Uterus (tissue), 4 donors: ENCODE measurements at regions of chr2 and their contacts with region 1.

Region 1: GRCh38 chr2:152717228-152718075 is at the start of gene PRPF40A:
- DNase-seq: peak; percentile 98 to 99
- H3K4me3 ChIP-seq: peak within 1 kb of the TSS; percentile 96 to 98
- H3K27ac ChIP-seq: peak within 1 kb of the TSS; percentile 97 to 98
- H3K4me1 ChIP-seq: peaks cover 7 to 9% of the 10 kb centered on the region in 2 donors
- H3K27me3 ChIP-seq: no peaks in the 10 kb centered on the region
- CTCF ChIP-seq: peak in 1 of 4 experiments; percentile 25
- POLR2A ChIP-seq: peak; percentile 56 to 74
- total RNA-seq, gene PRPF40A: 69.1 to 151 (median 85.3) TPM

Region 2: GRCh38 chr2:152175458-152176325 is 541.8 kb before region 1 on chr2 and contains the start of gene STAM2:
- intact Hi-C with region 1: loop called (anchors 10 kb)
- DNase-seq: peak; percentile 89 to 96
- H3K4me3 ChIP-seq: peak within 1 kb of the TSS; percentile 73 to 80
- H3K27ac ChIP-seq: peak within 1 kb of the TSS; percentile 94 to 96
- H3K4me1 ChIP-seq: no peaks in the 10 kb centered on the region
- H3K27me3 ChIP-seq: no peaks in the 10 kb centered on the region
- CTCF ChIP-seq: peak; percentile 92 to 96 (median 94)
- POLR2A ChIP-seq: peak; percentile 38 to 66
- total RNA-seq, gene STAM2: 30.0 to 83.0 (median 55.4) TPM

Region 3: GRCh38 chr2:152580714-152581113 is 136.7 kb before region 1 on chr2:
- intact Hi-C with region 1: no loop called
- DNase-seq: no peak
- H3K4me3 ChIP-seq: no peak overlapping the region
- H3K27ac ChIP-seq: no peak overlapping the region
- H3K4me1 ChIP-seq: peaks cover 0 to 3% of the 10 kb centered on the region in 2 donors
- H3K27me3 ChIP-seq: no peaks in the 10 kb centered on the region
- CTCF ChIP-seq: no peak
- POLR2A ChIP-seq: no peak